Activated naive CD4-positive, alpha-beta T cell treated with anti-CD3 and anti-CD28 coated beads, Interleukin-2, amount 10 ng/mL, durations not matched to agents 7 days and 5 days (primary cell): ENCODE measurements at regions of chr18 and their contacts with region 1.

Region 1: GRCh38 chr18:62566199-62566598 is 43.4 kb downstream of the ZCCHC2 start:
- DNase-seq: peak; percentile 40
- H3K4me3 Mint-ChIP-seq: no peak overlapping the region
- H3K27ac Mint-ChIP-seq: no peak overlapping the region
- H3K4me1 Mint-ChIP-seq: peaks cover 4% of the 10 kb centered on the region
- H3K27me3 Mint-ChIP-seq: no peaks in the 10 kb centered on the region

Region 2: GRCh38 chr18:62425465-62426195 is 140.6 kb before region 1 on chr18:
- CTCF ChIA-PET with region 1: interaction called, 14 read pairs
- DNase-seq: peak; percentile 68
- H3K4me3 Mint-ChIP-seq: no peak overlapping the region
- H3K27ac Mint-ChIP-seq: peak overlapping the region; percentile 6
- H3K4me1 Mint-ChIP-seq: peaks cover 50% of the 10 kb centered on the region
- H3K27me3 Mint-ChIP-seq: peaks cover 3% of the 10 kb centered on the region

Region 3: DNA sequence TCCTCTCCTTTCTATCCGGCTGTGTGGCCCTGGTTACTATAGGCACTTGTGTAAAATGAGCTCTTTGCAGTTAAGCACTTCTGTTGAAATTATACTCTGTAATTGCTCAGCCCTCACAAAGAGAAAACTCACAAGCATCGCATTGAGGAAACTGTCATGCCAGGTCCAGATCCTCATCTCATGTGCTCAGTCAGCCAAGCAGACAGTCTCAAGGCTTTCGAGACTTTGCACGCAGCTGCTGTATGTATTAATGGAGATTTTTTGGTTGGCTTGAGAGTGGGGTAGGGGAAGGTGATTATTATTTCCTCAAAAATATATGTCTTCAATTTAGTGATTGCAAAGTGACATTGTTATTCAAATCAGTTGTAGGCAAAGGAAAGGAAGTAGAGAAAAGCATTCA is 116.2 kb after region 1 on chr18:
- CTCF ChIA-PET with region 1: no interaction called
- DNase-seq: no peak
- H3K4me3 Mint-ChIP-seq: no peak overlapping the region
- H3K27ac Mint-ChIP-seq: no peak overlapping the region
- H3K4me1 Mint-ChIP-seq: no peaks in the 10 kb centered on the region
- H3K27me3 Mint-ChIP-seq: peaks cover 4% of the 10 kb centered on the region